HCT116 (cell line): ENCODE measurements at regions of chr10 and their contacts with region 1.

Region 1: DNA sequence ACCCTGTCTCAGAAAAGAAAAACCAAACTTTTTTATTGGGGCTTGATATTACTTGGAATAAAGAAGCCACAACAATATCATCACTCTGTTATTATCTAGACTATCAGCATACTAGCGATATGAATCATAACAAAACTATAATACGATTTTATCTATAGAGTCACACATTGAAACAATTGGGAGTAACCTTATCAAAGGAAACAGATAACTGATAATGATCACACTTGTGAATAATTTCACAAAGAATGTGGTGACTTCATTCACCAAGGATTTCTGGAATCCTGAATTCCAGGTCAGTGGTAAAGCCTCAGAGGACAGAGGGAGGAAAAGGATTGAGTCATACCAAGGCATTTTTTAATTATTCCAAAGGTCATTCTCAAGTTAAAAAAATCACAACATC is 32.1 kb upstream of the NMT2 start:
- DNase-seq: peak; percentile 90
- ATAC-seq: peak; percentile 79
- H3K4me3 ChIP-seq: peak overlapping the region in 1 of 2 experiments; percentile 36; a peak in 1 of 4 replicates
- H3K27ac ChIP-seq: peak overlapping the region; percentile 91; the same call in 1 of the 2 replicates
- H3K4me1 ChIP-seq: peaks cover 46 to 88% of the 10 kb centered on the region in 2 experiments
- H3K27me3 ChIP-seq: no peaks in the 10 kb centered on the region
- CTCF ChIP-seq: no peak
- POLR2A ChIP-seq: no peak
- RAD21 ChIP-seq: peak; percentile 20; the same call in 1 of the 2 replicates

Region 2: GRCh38 chr10:15168781-15169554 is 31.7 kb before region 1 on chr10:
- CTCF ChIA-PET with region 1: no interaction called
- POLR2A ChIA-PET with region 1: interaction called, 5 read pairs
- RAD21 ChIA-PET with region 1: no interaction called
- intact Hi-C with region 1: loop called (anchors 5 kb)
- DNase-seq: peak; percentile 92
- ATAC-seq: peak; percentile 69
- H3K4me3 ChIP-seq: peak overlapping the region; percentile 4 to 34; a peak in 1 of 4 replicates
- H3K27ac ChIP-seq: no peak overlapping the region; the same call in 1 of the 2 replicates
- H3K4me1 ChIP-seq: peaks cover 18 to 22% of the 10 kb centered on the region in 2 experiments
- H3K27me3 ChIP-seq: no peaks in the 10 kb centered on the region
- CTCF ChIP-seq: no peak
- POLR2A ChIP-seq: no peak
- RAD21 ChIP-seq: no peak

Region 3: DNA sequence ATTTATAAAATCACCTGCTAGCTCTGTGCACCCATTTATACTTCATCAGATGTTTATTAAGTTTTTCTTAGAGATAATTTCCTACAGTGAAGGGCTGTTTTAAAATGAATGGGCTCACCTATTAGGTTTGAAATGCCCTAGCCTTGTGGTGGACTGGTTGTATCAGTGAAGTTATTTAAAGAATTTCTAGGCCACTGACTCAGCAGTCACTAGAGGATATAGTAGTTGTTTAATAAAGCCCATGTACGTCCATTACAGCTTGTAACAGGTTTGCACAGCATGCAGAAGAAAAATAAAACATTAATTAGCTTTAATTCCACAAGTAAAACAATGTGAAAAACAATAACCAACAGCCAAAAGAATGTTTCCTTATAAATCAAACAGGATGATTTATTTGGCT is 1488.6 kb after region 1 on chr10:
- CTCF ChIA-PET with region 1: no interaction called
- POLR2A ChIA-PET with region 1: no interaction called
- RAD21 ChIA-PET with region 1: no interaction called
- intact Hi-C with region 1: no loop called
- DNase-seq: no peak
- ATAC-seq: no peak
- H3K4me3 ChIP-seq: no peak overlapping the region
- H3K27ac ChIP-seq: no peak overlapping the region
- H3K4me1 ChIP-seq: no peaks in the 10 kb centered on the region
- H3K27me3 ChIP-seq: no peaks in the 10 kb centered on the region
- CTCF ChIP-seq: no peak
- POLR2A ChIP-seq: no peak
- RAD21 ChIP-seq: no peak